ENCODE measurements at regions of chr7 and their contacts with region 1.

Region 1: DNA sequence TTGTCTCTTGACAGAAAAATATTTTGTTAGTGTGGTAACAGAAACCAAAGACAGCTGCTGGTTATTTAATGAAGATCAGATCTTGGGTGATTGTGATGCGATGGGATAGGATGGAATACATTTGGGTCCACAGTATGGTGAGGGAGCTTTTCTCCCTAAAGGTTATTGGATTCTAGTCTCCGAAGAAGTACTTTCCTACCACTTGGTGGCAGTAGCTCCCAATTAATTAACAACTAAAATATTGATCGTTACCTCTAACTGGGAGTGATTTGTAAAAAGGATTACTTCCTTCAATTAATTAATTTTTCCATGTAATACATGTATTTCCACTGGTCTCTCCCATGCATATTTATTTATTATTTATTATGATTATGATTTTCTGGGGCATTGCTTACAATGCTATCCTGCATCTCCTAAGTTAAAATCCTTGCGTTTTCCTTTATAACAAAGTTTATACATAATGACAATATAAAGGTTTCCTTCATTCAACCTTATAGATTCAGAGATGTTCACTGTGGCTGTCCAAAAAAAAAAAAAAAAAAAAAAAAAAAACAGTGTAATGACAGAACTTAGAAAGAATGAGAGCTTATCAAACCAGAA is 25.6 kb downstream of the TMEM196 start:
- DNase-seq: peak; percentile 21
- H3K4me3 ChIP-seq: no peak overlapping the region
- H3K27ac ChIP-seq: no peak overlapping the region
- H3K4me1 ChIP-seq: peaks cover 6% of the 10 kb centered on the region
- H3K27me3 ChIP-seq: no peaks in the 10 kb centered on the region
- CTCF ChIP-seq: peak; percentile 52 to 65

Region 2: DNA sequence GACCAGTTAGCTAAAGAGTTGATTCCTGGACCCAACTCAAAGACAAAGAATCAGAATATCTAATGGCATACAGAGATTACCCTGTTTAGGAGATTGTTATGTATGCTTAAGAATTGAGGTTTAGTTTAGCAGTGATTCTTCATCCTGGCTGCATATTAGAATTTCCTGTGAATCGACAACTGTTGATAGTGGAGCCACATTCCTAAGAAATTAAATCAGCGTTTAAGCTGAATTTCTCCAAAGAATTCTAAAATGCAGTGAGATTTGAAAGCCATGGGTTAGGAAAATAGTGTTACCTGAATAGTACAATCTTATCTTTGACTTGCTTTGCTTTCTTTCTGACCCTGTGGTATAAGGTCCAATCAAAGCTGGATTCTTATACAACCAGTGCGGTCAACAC is 586.2 kb before region 1 on chr7:
- CTCF ChIA-PET with region 1: interaction called, 17 read pairs
- dilution Hi-C with region 1: no loop called
- in situ Hi-C with region 1: no loop called
- intact Hi-C with region 1: no loop called
- DNase-seq: no peak
- H3K4me3 ChIP-seq: no peak overlapping the region
- H3K27ac ChIP-seq: no peak overlapping the region
- H3K4me1 ChIP-seq: no peaks in the 10 kb centered on the region
- H3K27me3 ChIP-seq: peaks cover 5% of the 10 kb centered on the region
- CTCF ChIP-seq: no peak

Region 3: DNA sequence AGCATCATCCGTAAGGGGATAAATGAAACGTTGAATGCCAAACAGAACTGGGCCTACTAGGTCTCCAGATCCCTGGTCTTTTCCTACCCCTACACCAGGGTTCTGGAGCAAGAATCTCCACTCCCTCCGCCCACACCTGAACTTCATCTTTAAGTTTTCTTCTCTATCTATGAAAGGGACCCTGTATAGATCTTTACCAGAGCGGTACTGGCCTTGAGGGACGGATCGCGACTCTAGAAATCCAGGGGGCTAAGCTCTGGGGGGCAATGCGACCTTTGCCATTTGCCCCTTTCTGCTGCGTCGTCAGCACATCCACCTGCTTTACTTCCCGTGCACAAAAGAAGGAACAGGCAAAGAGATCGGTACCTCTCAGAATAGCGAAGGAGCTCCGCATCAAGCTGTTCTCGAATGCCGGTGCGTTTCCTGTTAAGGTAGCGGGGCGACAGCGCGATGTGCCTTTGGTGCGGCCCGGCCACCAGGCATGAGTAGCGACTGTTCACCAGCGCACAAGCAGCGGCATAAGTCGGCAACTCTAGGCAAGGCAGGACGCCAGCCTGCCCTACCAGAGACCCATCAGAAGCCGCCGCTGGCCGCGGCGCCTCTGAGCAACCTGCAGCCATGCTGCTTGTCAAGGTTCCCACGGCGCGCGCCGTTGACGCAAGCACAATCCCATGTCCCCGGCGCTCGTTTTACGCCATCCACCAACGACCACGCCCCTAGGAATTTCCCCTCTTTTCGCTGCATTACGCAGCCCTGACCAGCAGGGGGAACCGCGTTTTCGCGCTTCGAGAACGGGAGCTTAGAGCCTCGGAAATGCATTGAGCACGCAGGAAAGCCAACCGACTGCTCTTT is 39.2 kb before region 1 on chr7 and contains the start of gene POLR1F:
- CTCF ChIA-PET with region 1: no interaction called
- dilution Hi-C with region 1: no loop called
- in situ Hi-C with region 1: no loop called
- intact Hi-C with region 1: loop called (anchors 2 kb)
- DNase-seq: peak; percentile 94
- H3K4me3 ChIP-seq: peak within 1 kb of the TSS; percentile 86 to 98 (median 87)
- H3K27ac ChIP-seq: peak within 1 kb of the TSS; percentile 90
- H3K4me1 ChIP-seq: peaks cover 14% of the 10 kb centered on the region
- H3K27me3 ChIP-seq: no peaks in the 10 kb centered on the region
- CTCF ChIP-seq: peak; percentile 91 to 93
- total RNA-seq, gene POLR1F: 18.6 to 19.7 TPM

Region 4: DNA sequence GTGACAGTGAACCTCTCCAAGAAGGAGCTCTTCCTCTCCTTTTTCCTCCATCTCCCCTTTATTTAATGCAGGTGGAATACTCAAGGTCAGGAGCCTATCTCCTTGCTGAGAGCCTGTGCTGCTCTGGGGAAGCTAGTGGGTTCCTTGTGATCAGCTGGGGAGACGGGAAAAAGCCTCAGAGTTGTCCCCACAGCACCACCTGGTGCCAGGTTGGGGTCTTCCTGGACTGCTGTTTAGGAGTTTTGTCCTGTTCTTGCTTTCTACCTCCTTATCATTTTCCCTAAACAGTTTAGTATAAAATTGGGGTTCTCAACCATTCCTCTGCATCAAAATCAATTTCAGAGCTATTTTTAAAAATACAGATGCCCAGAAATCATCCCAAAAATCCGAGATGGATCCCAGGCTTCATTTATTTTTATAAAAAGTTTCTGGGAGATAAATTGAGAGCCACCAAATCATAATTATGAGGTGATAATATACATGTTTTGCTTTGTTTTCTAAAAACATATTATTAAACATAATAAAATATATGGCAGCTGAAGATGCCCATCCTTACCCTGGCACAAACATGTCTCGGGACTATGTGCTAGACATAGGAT is 425.0 kb after region 1 on chr7:
- CTCF ChIA-PET with region 1: no interaction called
- dilution Hi-C with region 1: no loop called
- in situ Hi-C with region 1: loop called (anchors 5 to 10 kb)
- intact Hi-C with region 1: loop called (anchors 2 kb)
- DNase-seq: peak; percentile 41
- H3K4me3 ChIP-seq: no peak overlapping the region
- H3K27ac ChIP-seq: no peak overlapping the region
- H3K4me1 ChIP-seq: no peaks in the 10 kb centered on the region
- H3K27me3 ChIP-seq: no peaks in the 10 kb centered on the region
- CTCF ChIP-seq: peak; percentile 70 to 81

Region 5: GRCh38 chr7:20647908-20648776 is 900.3 kb after region 1 on chr7:
- CTCF ChIA-PET with region 1: no interaction called
- dilution Hi-C with region 1: no loop called
- in situ Hi-C with region 1: no loop called
- intact Hi-C with region 1: loop called (anchors 5 kb)
- DNase-seq: peak; percentile 22
- H3K4me3 ChIP-seq: no peak overlapping the region
- H3K27ac ChIP-seq: no peak overlapping the region
- H3K4me1 ChIP-seq: no peaks in the 10 kb centered on the region
- H3K27me3 ChIP-seq: peaks cover 2% of the 10 kb centered on the region
- CTCF ChIP-seq: peak; percentile 47 to 62